ENCODE measurements at regions of chrX and their contacts with region 1.

Region 1: DNA sequence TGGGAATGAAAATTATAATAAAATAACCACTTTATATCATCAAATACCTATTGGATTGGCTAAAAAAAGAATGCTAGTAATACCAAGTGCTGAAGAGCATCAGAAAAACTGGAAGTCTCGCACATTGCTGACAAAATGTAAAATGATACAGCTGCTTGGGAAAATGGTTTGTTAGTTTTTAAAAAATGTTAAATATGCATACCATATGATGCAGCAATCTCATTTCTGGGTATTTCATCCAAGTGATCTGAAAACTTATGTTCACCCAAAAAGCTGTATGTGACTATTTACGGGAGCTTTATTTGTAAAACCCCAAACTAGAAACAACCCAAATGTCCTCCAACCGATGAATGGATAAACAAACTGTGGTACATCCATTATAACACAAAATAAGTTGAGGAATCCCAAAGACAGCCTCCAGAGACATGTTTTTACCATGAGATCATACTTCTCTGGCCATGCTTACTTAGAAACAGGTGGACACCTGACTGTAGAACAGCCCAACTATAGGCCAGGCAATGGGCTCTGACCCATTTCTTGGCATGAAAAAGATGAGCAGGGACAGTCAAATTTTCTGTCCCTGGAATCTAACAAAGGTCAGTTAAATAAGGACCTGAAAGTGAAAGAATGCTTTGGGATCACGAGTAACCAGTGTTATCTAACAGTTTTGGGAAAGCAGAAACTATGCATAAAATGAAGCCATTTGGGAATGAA is 47.5 kb upstream of the FAM120C start:
- DNase-seq: no peak
- H3K4me3 ChIP-seq: no peak overlapping the region
- H3K27ac ChIP-seq: no peak overlapping the region
- H3K4me1 ChIP-seq: no peaks in the 10 kb centered on the region
- H3K27me3 ChIP-seq: no peaks in the 10 kb centered on the region
- CTCF ChIP-seq: no peak

Region 2: DNA sequence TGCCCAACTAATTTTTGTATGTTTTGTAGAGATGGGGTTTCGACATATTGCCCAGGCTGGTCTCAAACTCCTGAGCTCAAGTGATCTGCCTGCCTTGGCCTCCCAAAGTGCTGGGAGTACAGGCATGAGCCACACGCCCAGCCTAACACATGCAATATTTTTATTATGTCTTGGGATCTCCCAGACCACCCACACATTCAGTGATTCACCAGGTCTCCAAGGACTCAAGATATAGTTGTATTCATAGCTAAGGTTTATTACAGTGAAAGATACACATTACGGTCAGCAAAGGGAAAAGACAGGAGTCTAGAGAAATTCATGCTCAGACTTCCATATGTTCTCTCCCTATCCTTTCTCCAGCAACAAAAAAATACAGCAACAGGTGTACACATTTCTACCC is 22.1 kb before region 1 on chrX:
- CTCF ChIA-PET with region 1: no interaction called
- POLR2A ChIA-PET with region 1: interaction called, 12 read pairs
- intact Hi-C with region 1: no loop called
- DNase-seq: no peak
- H3K4me3 ChIP-seq: no peak overlapping the region
- H3K27ac ChIP-seq: no peak overlapping the region
- H3K4me1 ChIP-seq: no peaks in the 10 kb centered on the region
- H3K27me3 ChIP-seq: no peaks in the 10 kb centered on the region
- CTCF ChIP-seq: no peak

Measured in A673 (cell line).